Activated CD8-positive, alpha-beta T cell treated with anti-CD3 and anti-CD28 coated beads for 36 hours (primary cell): ENCODE measurements at regions of chr15 and their contacts with region 1.

Region 1: GRCh38 chr15:50884583-50884982 is 23.9 kb upstream of the AP4E1 start:
- DNase-seq: no peak
- ATAC-seq: no peak
- H3K4me3 Mint-ChIP-seq: no peak overlapping the region
- H3K27ac Mint-ChIP-seq: peak overlapping the region; percentile 88
- H3K4me1 Mint-ChIP-seq: peaks cover 64% of the 10 kb centered on the region
- H3K27me3 Mint-ChIP-seq: no peaks in the 10 kb centered on the region
- CTCF ChIP-seq: no peak

Region 2: GRCh38 chr15:50675536-50676144 is 208.9 kb before region 1 on chr15:
- CTCF ChIA-PET with region 1: interaction called, 26 read pairs
- POLR2A ChIA-PET with region 1: no interaction called
- intact Hi-C with region 1: loop called (anchors 5 kb)
- DNase-seq: no peak
- ATAC-seq: peak; percentile 27
- H3K4me3 Mint-ChIP-seq: no peak overlapping the region
- H3K27ac Mint-ChIP-seq: peak overlapping the region; percentile 46
- H3K4me1 Mint-ChIP-seq: peaks cover 26% of the 10 kb centered on the region
- H3K27me3 Mint-ChIP-seq: no peaks in the 10 kb centered on the region
- CTCF ChIP-seq: peak; percentile 98

Region 3: GRCh38 chr15:50740955-50741354 is 143.6 kb before region 1 on chr15:
- CTCF ChIA-PET with region 1: no interaction called
- POLR2A ChIA-PET with region 1: no interaction called
- intact Hi-C with region 1: no loop called
- DNase-seq: no peak
- ATAC-seq: no peak
- H3K4me3 Mint-ChIP-seq: no peak overlapping the region
- H3K27ac Mint-ChIP-seq: no peak overlapping the region
- H3K4me1 Mint-ChIP-seq: peaks cover 2% of the 10 kb centered on the region
- H3K27me3 Mint-ChIP-seq: no peaks in the 10 kb centered on the region
- CTCF ChIP-seq: no peak

Region 4: DNA sequence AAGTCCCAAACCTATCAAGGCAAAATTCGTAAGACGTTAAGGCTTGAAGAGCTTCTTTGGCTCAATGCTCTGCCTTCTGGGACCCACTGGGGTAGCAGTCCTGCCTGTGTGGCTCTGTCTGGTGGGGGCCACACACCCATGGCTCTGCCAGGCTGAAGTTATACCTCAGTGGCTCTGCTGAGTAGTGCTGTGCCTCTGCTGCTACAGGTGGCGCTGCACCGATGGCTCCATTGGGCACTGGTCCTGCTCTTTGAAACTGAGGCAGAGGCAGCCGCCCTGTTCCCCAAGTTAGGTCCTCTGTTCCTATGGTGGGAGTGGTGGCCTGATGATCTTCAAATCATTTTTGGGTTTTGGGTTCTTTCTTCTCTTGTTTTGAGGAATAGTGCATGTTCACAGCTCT is 44.1 kb before region 1 on chr15:
- CTCF ChIA-PET with region 1: no interaction called
- POLR2A ChIA-PET with region 1: no interaction called
- intact Hi-C with region 1: no loop called
- DNase-seq: peak; percentile 6
- ATAC-seq: peak; percentile 37
- H3K4me3 Mint-ChIP-seq: no peak overlapping the region
- H3K27ac Mint-ChIP-seq: no peak overlapping the region
- H3K4me1 Mint-ChIP-seq: no peaks in the 10 kb centered on the region
- H3K27me3 Mint-ChIP-seq: peaks cover 1% of the 10 kb centered on the region
- CTCF ChIP-seq: no peak

Region 5: DNA sequence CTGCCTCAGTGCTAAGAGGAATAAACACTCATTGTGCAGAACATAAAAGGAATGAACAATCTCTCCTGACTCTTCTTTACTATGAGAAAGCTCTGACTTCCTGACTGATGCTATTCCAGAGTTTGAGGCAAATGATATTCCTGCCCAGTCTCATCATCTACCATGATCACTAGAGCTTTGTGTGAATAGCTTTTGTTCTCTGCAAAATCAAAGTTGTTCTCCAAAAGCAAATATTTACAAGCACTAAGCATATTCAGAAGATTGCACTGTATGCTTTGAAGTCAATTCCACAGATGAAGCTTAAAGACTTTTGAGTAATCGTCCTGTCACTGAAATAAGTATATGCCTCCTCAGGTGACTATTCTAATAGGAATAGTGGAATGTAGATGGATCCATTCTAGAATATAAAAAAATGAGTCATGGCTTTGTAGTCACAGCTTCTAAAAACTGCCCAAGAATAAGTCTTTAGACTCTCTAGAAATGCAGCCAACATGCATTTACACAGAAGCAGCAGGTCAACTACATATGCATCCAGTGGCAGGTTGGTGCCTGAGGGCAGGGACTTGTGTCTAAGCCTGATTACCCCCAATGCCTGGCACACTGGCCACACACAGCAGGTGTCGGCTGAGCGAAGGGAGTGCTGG is 175.6 kb after region 1 on chr15:
- CTCF ChIA-PET with region 1: no interaction called
- POLR2A ChIA-PET with region 1: no interaction called
- intact Hi-C with region 1: no loop called
- DNase-seq: no peak
- ATAC-seq: no peak
- H3K4me3 Mint-ChIP-seq: no peak overlapping the region
- H3K27ac Mint-ChIP-seq: no peak overlapping the region
- H3K4me1 Mint-ChIP-seq: no peaks in the 10 kb centered on the region
- H3K27me3 Mint-ChIP-seq: peaks cover 17% of the 10 kb centered on the region
- CTCF ChIP-seq: no peak